IMR-90 (cell line): ENCODE measurements at regions of chr10 and their contacts with region 1.

Region 1: DNA sequence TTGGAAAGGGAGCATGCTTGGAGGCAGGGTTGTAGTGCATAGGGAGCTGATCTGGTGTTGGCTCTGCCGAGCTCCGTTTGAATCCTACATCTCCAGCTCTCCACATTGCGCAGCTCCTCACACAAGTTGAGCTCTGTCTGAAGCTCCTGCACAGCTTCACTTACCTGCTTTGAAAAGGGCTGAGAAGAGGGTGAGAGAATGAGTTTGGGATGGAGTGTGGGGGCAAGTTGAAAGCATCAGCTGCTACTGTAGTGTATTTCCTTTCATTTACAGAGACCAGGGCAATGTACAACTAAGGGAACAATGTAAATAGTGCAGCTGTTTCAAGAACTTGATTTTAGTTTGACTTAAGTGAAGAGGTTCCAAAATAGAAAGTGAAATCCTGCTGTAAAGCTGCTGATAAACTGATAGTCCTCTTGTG is 88.5 kb downstream of the VTI1A start:
- DNase-seq: peak; percentile 7
- ATAC-seq: peak; percentile 63
- H3K4me3 ChIP-seq: no peak overlapping the region
- H3K27ac ChIP-seq: no peak overlapping the region
- H3K4me1 ChIP-seq: peaks cover 4% of the 10 kb centered on the region; the same call in 1 of the 2 replicates
- H3K27me3 ChIP-seq: no peaks in the 10 kb centered on the region
- CTCF ChIP-seq: no peak
- POLR2A ChIP-seq: no peak
- RAD21 ChIP-seq: no peak

Region 2: GRCh38 chr10:112520864-112521263 is 14.7 kb before region 1 on chr10:
- CTCF ChIA-PET with region 1: no interaction called
- POLR2A ChIA-PET with region 1: no interaction called
- dilution Hi-C with region 1: no loop called
- in situ Hi-C with region 1: no loop called
- intact Hi-C with region 1: no loop called
- DNase-seq: no peak
- ATAC-seq: peak; percentile 42; the same call in 1 of the 2 replicates
- H3K4me3 ChIP-seq: no peak overlapping the region
- H3K27ac ChIP-seq: no peak overlapping the region
- H3K4me1 ChIP-seq: peaks cover 6% of the 10 kb centered on the region
- H3K27me3 ChIP-seq: no peaks in the 10 kb centered on the region
- CTCF ChIP-seq: no peak
- POLR2A ChIP-seq: no peak
- RAD21 ChIP-seq: no peak

Region 3: DNA sequence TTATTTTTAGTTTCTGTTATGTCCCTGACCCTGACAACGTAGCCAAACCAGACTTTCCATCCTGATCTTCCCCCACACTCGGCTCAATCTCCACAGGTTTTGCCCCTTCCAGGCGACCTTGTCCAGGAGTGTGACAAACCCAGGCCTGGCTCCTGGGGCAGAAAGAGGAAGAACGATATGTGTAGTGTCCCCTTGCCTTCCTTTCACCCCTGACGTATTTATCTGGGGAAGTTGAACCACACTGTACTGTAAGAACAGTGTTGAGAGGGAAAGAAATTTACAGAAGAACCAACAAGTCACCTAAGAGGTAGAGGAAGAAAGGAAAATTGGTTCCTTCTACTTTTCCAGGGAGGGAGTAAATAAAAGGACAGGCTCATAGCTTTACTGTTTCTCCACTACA is 69.5 kb after region 1 on chr10:
- CTCF ChIA-PET with region 1: no interaction called
- POLR2A ChIA-PET with region 1: no interaction called
- dilution Hi-C with region 1: no loop called
- in situ Hi-C with region 1: no loop called
- intact Hi-C with region 1: loop called (anchors 2 kb)
- DNase-seq: no peak
- ATAC-seq: no peak
- H3K4me3 ChIP-seq: no peak overlapping the region
- H3K27ac ChIP-seq: no peak overlapping the region
- H3K4me1 ChIP-seq: no peaks in the 10 kb centered on the region
- H3K27me3 ChIP-seq: no peaks in the 10 kb centered on the region
- CTCF ChIP-seq: no peak
- POLR2A ChIP-seq: no peak
- RAD21 ChIP-seq: no peak

Region 4: DNA sequence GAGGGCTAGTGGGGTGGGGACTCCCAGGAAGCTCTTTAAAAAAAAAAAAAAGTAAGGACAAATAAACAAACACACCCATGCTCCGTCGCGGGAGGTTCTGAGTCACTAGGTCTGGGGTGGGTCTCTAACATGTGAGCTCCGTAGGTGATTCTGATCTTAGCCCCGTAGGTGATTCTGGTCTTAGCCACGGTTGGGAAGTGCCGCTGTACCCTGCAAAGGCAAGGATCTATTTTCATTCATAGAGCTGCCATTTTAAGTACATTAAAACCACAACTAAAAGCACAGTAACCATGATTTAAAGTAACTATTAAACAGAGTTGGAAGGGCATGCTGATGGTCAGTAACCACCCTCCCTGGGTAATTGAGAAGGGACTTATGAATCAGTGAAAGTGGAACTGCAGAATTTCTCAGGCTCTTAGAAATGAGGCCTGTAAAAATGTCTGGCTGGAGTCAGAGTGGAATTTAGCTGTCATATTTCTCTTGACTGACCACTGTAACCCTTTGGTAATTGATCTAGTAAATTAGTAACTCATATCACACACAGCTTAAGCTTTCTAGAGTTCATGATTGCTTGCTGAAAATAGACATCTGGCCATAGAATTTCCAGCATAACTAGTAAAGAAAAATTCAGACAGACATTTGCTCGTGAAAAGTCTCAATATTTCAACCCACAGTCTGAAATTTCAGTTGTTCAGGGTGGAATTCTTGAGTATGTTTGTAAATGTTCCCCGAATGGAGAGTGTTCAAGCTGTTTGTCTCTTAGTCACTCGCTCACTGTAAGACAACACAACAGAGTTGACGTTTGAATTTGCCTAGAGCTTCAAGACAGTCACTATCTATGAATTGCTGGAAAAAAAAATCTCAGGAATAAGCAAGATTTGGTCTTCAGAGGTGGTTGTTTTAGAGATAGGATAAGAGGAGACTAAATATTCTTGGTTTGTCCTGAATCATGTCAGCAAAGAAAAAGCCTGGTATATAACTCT is 380.3 kb after region 1 on chr10:
- CTCF ChIA-PET with region 1: no interaction called
- POLR2A ChIA-PET with region 1: no interaction called
- dilution Hi-C with region 1: no loop called
- in situ Hi-C with region 1: no loop called
- intact Hi-C with region 1: no loop called
- DNase-seq: peak; percentile 51
- ATAC-seq: peak; percentile 44
- H3K4me3 ChIP-seq: no peak overlapping the region
- H3K27ac ChIP-seq: peak overlapping the region; percentile 36; the same call in 1 of the 2 replicates
- H3K4me1 ChIP-seq: peaks cover 6% of the 10 kb centered on the region
- H3K27me3 ChIP-seq: no peaks in the 10 kb centered on the region
- CTCF ChIP-seq: no peak
- POLR2A ChIP-seq: no peak
- RAD21 ChIP-seq: no peak